ENCODE measurements at regions of chr14 and their contacts with region 1.

Region 1: DNA sequence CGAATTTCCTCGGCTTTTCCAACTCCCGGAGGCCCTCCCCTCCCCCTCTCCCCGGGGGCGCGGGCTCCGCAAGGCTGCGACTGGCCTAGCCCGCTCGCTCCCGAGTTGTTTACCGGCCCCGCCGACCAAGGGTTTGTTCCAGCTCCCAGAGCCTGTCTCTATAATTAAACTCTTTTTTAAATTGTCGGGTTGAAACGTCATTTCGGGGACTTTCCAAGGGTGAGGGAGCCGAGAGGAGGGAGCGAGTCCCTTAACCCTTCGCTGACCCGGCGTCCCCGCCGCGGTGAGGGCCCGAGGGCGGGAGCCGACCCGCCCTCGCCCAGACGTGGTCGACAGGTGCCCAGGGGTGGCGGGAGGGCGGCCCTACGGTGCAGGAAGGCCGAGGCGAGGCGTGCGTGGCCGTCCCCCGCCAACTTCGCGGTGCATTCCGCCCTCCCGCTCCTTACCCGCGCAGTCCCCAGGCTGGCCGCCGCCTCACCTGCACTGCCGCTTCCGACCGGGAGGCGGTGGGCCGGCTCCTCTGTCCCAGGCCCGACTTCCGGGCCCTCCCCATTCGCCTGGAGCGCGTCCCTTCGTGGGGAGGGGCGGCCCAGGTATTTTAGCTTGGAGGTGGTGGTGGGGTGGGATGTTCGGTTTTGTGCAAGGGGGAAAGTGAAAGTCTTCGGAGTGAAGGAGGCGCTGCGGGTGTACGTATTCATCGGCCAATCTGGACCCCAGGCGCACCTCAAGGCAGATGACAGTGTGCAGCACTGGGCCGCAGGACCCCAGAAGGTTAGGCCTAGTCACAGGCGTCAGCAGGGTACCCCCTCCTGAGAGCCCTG is 2.9 kb upstream of the ZFP36L1 start:
- DNase-seq: peak; percentile 78
- H3K4me3 Mint-ChIP-seq: peak overlapping the region; percentile 84
- H3K27ac Mint-ChIP-seq: peak overlapping the region; percentile 99
- H3K4me1 Mint-ChIP-seq: peaks cover 34% of the 10 kb centered on the region
- H3K27me3 Mint-ChIP-seq: no peaks in the 10 kb centered on the region

Region 2: GRCh38 chr14:67816326-67817002 is 979.3 kb before region 1 on chr14 and contains the start of gene ZFYVE26:
- intact Hi-C with region 1: loop called (anchors 5 kb)
- DNase-seq: peak; percentile 89
- H3K4me3 Mint-ChIP-seq: peak within 1 kb of the TSS; percentile 87
- H3K27ac Mint-ChIP-seq: peak within 1 kb of the TSS; percentile 94
- H3K4me1 Mint-ChIP-seq: peaks cover 38% of the 10 kb centered on the region
- H3K27me3 Mint-ChIP-seq: no peaks in the 10 kb centered on the region
- total RNA-seq, gene ZFYVE26: 16.0 and 16.2 TPM in 2 replicates

Region 3: GRCh38 chr14:68232300-68233055 is 563.3 kb before region 1 on chr14:
- intact Hi-C with region 1: loop called (anchors 5 kb)
- DNase-seq: peak; percentile 20
- H3K4me3 Mint-ChIP-seq: no peak overlapping the region
- H3K27ac Mint-ChIP-seq: no peak overlapping the region
- H3K4me1 Mint-ChIP-seq: peaks cover 15% of the 10 kb centered on the region
- H3K27me3 Mint-ChIP-seq: no peaks in the 10 kb centered on the region

Region 4: DNA sequence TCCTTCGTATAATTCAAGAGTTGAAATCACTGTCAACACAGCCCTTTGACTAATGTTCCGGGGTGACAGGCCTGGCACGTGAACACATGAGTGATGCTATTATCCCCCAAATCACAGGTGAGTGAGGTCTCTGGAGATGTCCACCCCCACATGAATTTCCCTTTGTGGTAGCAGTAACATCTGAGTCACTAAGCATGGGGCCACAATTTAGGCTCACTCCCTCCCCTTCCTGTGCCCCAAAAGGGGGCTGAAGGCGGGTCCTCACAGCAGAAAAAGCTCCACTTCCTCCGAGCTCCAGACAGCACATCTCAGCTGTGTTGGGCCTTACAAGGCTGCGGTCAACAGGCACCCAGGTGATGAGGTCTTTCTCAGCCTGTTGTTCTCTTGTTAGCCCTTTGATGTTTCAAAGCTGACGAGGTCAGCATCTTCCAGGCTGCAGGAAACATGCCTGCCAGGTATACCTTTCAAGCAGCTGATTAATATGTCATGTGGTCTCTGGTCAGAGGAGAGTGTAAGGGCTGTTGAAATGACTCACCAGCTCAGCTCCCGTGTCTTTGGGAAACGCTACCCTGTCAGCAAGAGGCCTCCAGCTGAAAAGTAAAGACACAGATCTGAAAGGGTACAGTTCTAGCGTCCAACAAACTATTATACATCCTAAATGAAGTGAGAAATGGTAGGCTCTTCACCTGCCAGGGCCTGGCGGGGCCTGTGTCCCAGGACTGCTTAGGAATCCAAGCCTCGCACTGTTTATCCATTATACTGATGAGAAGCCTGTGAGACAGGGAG is 110.2 kb before region 1 on chr14:
- intact Hi-C with region 1: loop called (anchors 1 kb)
- DNase-seq: peak; percentile 70
- H3K4me3 Mint-ChIP-seq: peak overlapping the region; percentile 24
- H3K27ac Mint-ChIP-seq: peak overlapping the region; percentile 76
- H3K4me1 Mint-ChIP-seq: peaks cover 41% of the 10 kb centered on the region
- H3K27me3 Mint-ChIP-seq: no peaks in the 10 kb centered on the region

Region 5: GRCh38 chr14:68816262-68816942 is 20.6 kb after region 1 on chr14:
- intact Hi-C with region 1: loop called (anchors 1 kb)
- DNase-seq: peak; percentile 83
- H3K4me3 Mint-ChIP-seq: peak overlapping the region; percentile 79
- H3K27ac Mint-ChIP-seq: peak overlapping the region; percentile 92
- H3K4me1 Mint-ChIP-seq: peaks cover 51% of the 10 kb centered on the region
- H3K27me3 Mint-ChIP-seq: no peaks in the 10 kb centered on the region

Region 6: GRCh38 chr14:69068744-69069421 is 273.1 kb after region 1 on chr14:
- intact Hi-C with region 1: no loop called
- DNase-seq: no peak
- H3K4me3 Mint-ChIP-seq: no peak overlapping the region
- H3K27ac Mint-ChIP-seq: no peak overlapping the region
- H3K4me1 Mint-ChIP-seq: peaks cover 21% of the 10 kb centered on the region
- H3K27me3 Mint-ChIP-seq: no peaks in the 10 kb centered on the region

Measured in activated T-helper 2 cell treated with anti-CD3 and anti-CD28 coated beads, Interferon-gamma antibody, Interleukin-2, Interleukin-4, amounts not matched to agents 10 μg/mL and 5 μg/mL and 100 μg/mL, durations not matched to agents 14 hours and 24 hours and 36 hours (primary cell).